Left cardiac atrium (tissue), 4 donors: ENCODE measurements at regions of chr11 and their contacts with region 1.

Region 1: GRCh38 chr11:67382276-67383136 is 9.1 kb upstream of the CLCF1 start:
- DNase-seq: peak; percentile 84
- ATAC-seq: peak; percentile 78 to 89

Region 2: GRCh38 chr11:67345920-67346799 is 36.3 kb before region 1 on chr11:
- intact Hi-C with region 1: loop called (anchors 5 kb)
- DNase-seq: no peak
- ATAC-seq: peak in 1 of 2 donors; percentile 45

Region 3: GRCh38 chr11:67356864-67357561 is 25.5 kb before region 1 on chr11:
- intact Hi-C with region 1: loop called in 1 of 2 experiments (anchors 2 kb)
- DNase-seq: peak; percentile 54
- ATAC-seq: peak in 1 of 2 donors; percentile 1